ENCODE measurements at regions of chr4 and their contacts with region 1.

Region 1: DNA sequence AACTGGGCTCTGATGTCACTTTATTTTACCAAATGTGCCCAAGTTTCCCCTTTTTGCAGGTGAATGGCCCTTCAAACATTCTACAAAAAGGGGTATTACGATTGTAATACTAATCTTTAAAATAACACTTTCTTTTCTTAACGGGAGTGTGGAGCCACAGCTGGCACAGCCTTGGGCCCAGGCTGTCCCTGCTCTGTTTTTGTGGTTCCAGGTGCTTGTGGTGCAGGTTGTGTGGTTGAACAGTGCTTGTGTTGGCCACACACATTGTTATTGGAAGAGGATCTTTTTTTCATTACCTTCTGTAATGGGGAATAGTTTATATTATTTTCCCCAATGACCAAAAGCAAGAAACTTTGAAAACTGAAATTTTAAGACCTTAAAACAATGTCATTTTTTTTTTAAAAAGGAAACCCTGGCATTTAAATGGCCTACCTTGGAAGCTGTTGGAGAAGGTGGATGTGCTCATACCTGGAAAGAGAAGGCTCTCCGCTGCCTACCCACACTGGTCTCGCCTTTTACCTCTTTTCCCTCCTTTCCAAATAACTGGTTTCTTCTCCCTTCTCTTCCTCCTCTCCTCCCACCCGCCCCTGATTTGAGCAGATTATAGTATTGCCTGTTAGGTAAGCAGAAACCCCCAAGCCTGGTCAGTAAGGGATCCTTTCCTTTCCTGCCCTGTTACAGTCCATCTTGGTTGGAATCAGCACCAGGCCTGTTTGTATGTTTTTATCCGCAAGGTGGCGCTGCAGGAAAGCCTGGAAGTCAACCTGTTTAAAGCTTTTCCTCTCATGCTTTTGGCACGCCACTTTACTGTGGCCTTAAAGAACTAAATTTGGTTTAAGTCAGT is 28.6 kb downstream of the HADH start:
- DNase-seq: peak; percentile 69
- H3K4me3 Mint-ChIP-seq: no peak overlapping the region
- H3K27ac Mint-ChIP-seq: peak overlapping the region; percentile 4
- H3K4me1 Mint-ChIP-seq: peaks cover 16% of the 10 kb centered on the region
- H3K27me3 Mint-ChIP-seq: no peaks in the 10 kb centered on the region

Region 2: GRCh38 chr4:107989537-107990386 is 28.5 kb before region 1 on chr4 and contains the start of gene HADH:
- intact Hi-C with region 1: loop called (anchors 1 kb)
- DNase-seq: peak; percentile 95
- H3K4me3 Mint-ChIP-seq: peak within 1 kb of the TSS; percentile 97
- H3K27ac Mint-ChIP-seq: peak within 1 kb of the TSS; percentile 96
- H3K4me1 Mint-ChIP-seq: peaks cover 57% of the 10 kb centered on the region
- H3K27me3 Mint-ChIP-seq: no peaks in the 10 kb centered on the region
- total RNA-seq, gene HADH: 33.9 and 36.8 TPM in 2 replicates

Region 3: GRCh38 chr4:108045694-108046038 is 27.4 kb after region 1 on chr4:
- intact Hi-C with region 1: no loop called
- DNase-seq: no peak
- H3K4me3 Mint-ChIP-seq: no peak overlapping the region
- H3K27ac Mint-ChIP-seq: peak overlapping the region; percentile 53
- H3K4me1 Mint-ChIP-seq: peaks cover 59% of the 10 kb centered on the region
- H3K27me3 Mint-ChIP-seq: no peaks in the 10 kb centered on the region

Region 4: DNA sequence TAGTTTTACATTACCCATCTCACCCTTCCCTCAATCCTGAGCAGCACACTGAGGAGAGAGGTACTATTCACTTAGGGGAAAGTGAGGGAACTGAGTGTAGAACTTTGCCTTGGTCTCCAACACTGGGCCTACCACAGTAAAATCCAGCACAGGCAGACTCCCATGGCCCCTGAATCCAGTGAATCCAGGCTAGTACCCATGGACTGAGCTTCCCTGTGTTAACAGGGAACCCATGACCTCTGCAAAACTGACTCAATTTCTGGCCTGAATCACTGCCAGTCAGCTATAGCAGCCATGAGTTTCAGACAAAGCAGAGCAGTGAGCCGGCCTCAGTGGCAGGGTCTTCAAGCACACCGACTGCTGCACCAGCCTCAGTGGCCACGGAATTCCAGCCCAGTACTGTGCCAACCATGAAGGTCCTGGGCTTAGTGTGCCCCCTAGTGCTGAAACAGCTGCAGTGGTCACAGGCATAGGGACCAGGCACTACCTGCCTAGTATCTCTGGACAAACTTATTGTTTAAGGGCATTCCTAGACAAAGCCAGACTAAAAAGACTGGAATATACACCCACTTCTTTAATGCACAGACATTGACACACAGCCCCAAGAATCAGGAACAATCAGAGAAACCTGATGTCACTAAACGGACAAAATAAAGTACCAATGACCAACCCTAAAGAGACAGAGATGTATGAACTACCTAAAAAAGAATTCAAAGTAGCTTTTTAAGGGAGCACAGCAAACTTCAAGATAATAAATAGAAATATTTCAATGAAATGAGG is 474.7 kb after region 1 on chr4:
- intact Hi-C with region 1: loop called (anchors 1 kb)
- DNase-seq: no peak
- H3K4me3 Mint-ChIP-seq: no peak overlapping the region
- H3K27ac Mint-ChIP-seq: no peak overlapping the region
- H3K4me1 Mint-ChIP-seq: no peaks in the 10 kb centered on the region
- H3K27me3 Mint-ChIP-seq: peaks cover 2% of the 10 kb centered on the region

Region 5: GRCh38 chr4:108570993-108571569 is 552.8 kb after region 1 on chr4:
- intact Hi-C with region 1: loop called (anchors 1 kb)
- DNase-seq: no peak
- H3K4me3 Mint-ChIP-seq: no peak overlapping the region
- H3K27ac Mint-ChIP-seq: no peak overlapping the region
- H3K4me1 Mint-ChIP-seq: peaks cover 19% of the 10 kb centered on the region
- H3K27me3 Mint-ChIP-seq: no peaks in the 10 kb centered on the region

Region 6: DNA sequence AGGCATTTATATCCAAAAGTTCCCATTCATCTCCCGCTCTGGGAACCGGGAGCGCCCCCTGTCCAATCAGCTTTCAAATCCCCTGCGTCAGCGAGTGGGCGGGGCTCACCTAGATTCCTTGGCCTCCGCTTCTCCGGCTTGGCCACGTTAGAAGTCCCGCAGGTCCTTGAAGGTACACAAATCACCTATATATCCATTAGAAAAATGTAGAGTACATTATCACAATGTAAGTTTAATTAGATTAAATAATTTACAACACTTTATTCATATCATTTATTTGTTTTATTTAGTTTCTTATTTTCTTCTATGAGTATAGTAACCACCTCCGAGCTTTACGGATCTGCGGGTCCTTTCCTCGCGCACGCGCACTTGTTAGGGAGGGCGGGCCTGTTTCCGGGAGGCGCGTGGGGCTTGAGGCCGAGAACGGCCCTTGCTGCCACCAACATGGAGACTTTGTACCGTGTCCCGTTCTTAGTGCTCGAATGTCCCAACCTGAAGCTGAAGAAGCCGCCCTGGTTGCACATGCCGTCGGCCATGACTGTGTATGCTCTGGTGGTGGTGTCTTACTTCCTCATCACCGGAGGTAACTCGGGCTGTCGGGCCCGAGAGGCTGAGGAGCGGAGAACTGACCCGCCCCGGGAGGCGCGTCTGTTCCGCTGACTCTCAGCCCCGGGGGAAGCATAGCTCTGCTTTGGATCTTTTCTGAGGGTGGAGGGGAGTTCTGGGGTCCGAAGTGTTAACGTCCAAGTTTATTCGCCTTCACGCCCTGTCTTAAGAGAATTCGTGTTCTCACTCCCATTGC is 632.2 kb after region 1 on chr4 and contains the start of gene OSTC:
- intact Hi-C with region 1: loop called (anchors 1 kb)
- DNase-seq: peak; percentile 90
- H3K4me3 Mint-ChIP-seq: peak within 1 kb of the TSS; percentile 99
- H3K27ac Mint-ChIP-seq: peak within 1 kb of the TSS; percentile 93
- H3K4me1 Mint-ChIP-seq: peaks cover 39% of the 10 kb centered on the region
- H3K27me3 Mint-ChIP-seq: no peaks in the 10 kb centered on the region
- total RNA-seq, gene OSTC: 96.1 and 96.7 TPM in 2 replicates

Region 7: GRCh38 chr4:109406338-109406931 is 1388.2 kb after region 1 on chr4:
- intact Hi-C with region 1: loop called (anchors 5 kb)
- DNase-seq: peak; percentile 20
- H3K4me3 Mint-ChIP-seq: no peak overlapping the region
- H3K27ac Mint-ChIP-seq: no peak overlapping the region
- H3K4me1 Mint-ChIP-seq: no peaks in the 10 kb centered on the region
- H3K27me3 Mint-ChIP-seq: peaks cover 13% of the 10 kb centered on the region

Measured in activated T-helper 1 cell treated with anti-CD3 and anti-CD28 coated beads, Interleukin-12 subunit alpha, Interleukin-12 subunit beta, Interleukin-2, Interleukin-4 antibody, amounts not matched to agents 30 ng/mL and 10 ng/mL and 1 ng/mL, durations not matched to agents 14 hours and 24 hours and 36 hours (primary cell).